Colonic mucosa (tissue), 4 donors: ENCODE measurements at regions of chr14 and their contacts with region 1.

Region 1: DNA sequence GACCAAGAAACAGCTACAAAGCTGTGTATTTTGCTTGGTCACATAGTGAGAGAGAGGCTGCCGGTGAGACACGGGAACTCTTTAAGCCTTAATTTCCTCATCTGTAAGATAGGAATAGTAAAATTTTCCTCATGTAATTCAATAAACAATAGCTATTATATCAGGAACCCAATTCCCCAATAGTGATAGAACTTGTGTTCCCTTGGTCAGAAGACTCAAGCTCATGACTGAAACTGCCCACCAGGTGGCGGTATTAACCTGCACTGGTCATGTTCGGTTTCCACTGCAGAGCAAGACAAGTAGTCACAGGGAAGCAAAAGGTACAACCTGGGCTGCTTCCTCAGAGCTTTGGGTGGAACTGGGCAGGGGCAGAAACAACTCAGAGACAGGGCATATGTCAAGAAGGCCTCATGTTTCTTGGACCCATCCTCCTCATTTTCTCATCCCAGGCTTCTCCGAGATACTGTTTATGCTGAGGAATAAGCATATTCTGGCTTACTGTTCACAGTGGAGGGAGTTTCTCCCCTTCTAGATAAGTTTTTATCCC is 4.2 kb upstream of the AJUBA start:
- DNase-seq: peak; percentile 93
- H3K4me3 ChIP-seq: no peak overlapping the region
- H3K27ac ChIP-seq: no peak overlapping the region
- H3K4me1 ChIP-seq: no peaks in the 10 kb centered on the region
- H3K27me3 ChIP-seq: peaks cover 6% of the 10 kb centered on the region
- CTCF ChIP-seq: peak; percentile 95

Region 2: DNA sequence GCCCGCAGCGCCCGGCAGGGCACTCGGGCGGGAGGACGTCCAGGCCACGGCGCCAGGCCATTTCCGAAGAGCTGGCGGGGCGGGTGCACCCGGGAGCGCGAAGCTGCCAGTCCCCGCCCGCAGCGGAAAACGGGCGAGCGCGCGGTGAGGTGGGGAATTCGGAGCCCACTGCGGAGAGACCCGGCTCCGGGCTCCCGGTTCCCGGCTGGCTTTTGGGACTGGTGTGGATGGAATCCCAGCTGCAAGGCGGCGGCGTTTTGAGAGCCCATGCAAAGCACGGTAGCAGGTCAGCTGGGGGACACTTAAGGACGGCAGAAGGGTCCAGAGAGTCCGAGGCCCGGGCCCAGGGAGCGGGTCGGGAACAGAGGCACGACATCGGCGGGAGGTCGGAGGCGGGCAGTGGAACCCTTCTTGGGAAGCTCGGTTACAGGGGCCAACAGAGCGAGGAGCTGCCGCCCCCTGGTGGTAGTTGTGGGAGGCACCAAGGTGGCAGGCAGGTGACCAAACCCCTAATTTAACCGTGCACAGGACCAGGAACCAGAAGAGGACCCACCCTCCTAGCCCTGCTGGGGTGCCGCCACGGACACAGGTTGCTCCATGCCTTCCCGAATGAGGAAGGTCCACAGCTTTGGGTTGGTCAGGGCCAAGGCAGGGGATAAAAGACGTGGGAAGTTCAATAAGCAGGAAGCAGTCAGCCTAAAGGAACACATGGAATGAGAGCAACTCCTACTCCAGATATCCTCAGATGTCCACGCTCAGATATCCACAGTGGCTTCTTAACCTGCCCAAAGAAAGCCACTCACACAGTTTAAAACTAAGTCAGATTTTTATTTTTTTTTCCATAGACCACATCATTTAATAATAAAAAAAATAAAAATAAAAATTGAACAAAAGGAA is 71.4 kb after region 1 on chr14:
- intact Hi-C with region 1: loop called (anchors 2 kb)
- DNase-seq: peak; percentile 95
- H3K4me3 ChIP-seq: peak overlapping the region; percentile 57
- H3K27ac ChIP-seq: peak overlapping the region; percentile 74
- H3K4me1 ChIP-seq: peaks cover 5% of the 10 kb centered on the region
- H3K27me3 ChIP-seq: no peaks in the 10 kb centered on the region
- CTCF ChIP-seq: peak; percentile 90

Region 3: DNA sequence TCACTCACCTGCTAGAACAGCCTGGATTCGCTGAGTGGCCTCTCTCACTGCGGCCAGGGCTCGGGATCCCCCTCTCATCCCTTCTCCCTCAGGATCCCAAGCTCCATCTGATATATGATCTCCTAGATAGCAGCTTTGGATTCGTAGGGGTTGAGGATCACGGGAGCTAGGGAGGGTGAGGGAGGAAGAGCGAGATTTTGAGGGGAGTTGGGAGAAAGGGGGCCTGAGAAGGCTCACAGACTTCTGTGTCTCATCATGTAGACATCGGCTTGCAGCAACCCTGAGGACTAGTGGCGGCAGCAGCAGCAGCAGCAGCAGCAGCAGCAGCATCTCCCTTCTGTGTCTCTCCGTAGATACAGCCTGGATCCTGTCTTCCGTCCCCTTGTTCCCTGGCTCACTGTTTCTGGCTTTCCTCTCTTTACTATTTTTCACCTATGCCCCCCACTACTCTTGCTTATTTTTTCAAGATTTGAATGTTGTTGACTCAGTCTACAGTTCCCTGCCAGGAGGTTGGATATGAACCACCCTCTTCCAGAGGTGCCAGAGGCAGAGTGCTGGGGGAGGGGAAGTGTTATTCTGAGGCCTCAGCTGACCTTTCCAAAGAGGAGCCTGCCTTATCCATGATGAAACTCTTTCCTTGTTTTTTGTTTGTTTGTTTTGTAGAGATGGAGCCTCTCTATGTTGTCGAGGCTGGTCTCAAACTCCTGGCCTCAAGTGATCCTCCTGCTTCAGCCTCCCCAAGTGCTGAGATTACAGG is 118.2 kb after region 1 on chr14 and contains the start of gene CIROP:
- intact Hi-C with region 1: no loop called
- DNase-seq: no peak
- H3K4me3 ChIP-seq: no peak within 1 kb of the TSS
- H3K27ac ChIP-seq: no peak within 1 kb of the TSS
- H3K4me1 ChIP-seq: no peaks in the 10 kb centered on the region
- H3K27me3 ChIP-seq: no peaks in the 10 kb centered on the region
- CTCF ChIP-seq: no peak
- total RNA-seq, gene CIROP: not detected